MCF 10A (cell line): ENCODE measurements at regions of chr10 and their contacts with region 1.

Region 1: GRCh38 chr10:100100651-100101184 is 19.0 kb upstream of the CPN1 start:
- DNase-seq: peak; percentile 61
- H3K4me3 Mint-ChIP-seq: no peak overlapping the region
- H3K27ac Mint-ChIP-seq: no peak overlapping the region
- H3K4me1 Mint-ChIP-seq: no peaks in the 10 kb centered on the region
- H3K27me3 Mint-ChIP-seq: no peaks in the 10 kb centered on the region
- CTCF ChIP-seq: peak; percentile 35

Region 2: GRCh38 chr10:99906470-99906869 is 194.2 kb before region 1 on chr10:
- CTCF ChIA-PET with region 1: no interaction called
- POLR2A ChIA-PET with region 1: no interaction called
- intact Hi-C with region 1: loop called (anchors 1 kb)
- DNase-seq: peak; percentile 96
- H3K4me3 Mint-ChIP-seq: no peak overlapping the region
- H3K27ac Mint-ChIP-seq: peak overlapping the region; percentile 80
- H3K4me1 Mint-ChIP-seq: peaks cover 14% of the 10 kb centered on the region
- H3K27me3 Mint-ChIP-seq: no peaks in the 10 kb centered on the region
- CTCF ChIP-seq: peak; percentile 38

Region 3: DNA sequence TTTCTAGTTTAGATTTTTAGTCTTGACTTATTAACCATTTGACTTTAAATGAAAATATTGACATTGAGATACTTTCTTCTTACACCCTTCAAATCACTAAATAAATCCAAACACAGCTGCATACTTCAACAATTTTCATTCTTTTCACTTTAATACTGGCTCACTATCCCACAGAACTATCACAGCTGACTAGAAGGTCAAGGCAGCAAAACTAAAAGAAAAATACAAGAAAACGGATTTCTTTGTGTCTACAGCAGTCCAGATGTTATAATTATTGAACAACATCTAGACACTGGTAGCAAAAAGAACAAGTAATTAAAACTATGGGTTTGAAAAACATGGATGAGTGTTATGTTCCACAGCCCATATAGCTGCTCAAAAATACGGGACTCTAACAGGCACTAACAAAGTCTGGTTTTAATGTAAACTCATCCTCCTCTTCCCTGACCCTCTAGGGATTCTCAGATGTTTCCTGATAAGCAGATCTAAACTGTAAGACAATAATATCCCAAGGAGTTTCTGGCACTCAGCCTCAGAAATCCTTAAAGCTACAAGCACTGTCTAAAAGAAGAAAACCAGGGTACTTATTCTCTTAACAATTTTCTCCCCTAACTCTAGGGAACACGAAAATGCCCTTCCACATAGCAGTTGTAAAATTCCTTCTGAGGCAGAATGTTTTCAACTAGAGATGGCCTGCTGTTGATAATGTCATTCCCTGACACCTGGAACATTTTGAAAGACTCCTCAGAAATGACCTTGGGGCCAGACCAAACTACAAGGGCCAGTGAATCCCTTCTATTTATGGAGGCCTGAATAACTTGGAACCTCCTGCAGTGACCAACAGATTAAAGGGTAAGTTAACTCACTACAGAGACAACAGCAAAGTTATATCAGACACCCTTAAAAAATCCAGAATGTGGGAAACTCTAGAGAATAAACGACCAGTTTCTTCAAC is 103.8 kb before region 1 on chr10:
- CTCF ChIA-PET with region 1: no interaction called
- POLR2A ChIA-PET with region 1: no interaction called
- intact Hi-C with region 1: no loop called
- DNase-seq: no peak
- H3K4me3 Mint-ChIP-seq: peak overlapping the region; percentile 41
- H3K27ac Mint-ChIP-seq: peak overlapping the region; percentile 80
- H3K4me1 Mint-ChIP-seq: peaks cover 28% of the 10 kb centered on the region
- H3K27me3 Mint-ChIP-seq: no peaks in the 10 kb centered on the region
- CTCF ChIP-seq: no peak

Region 4: GRCh38 chr10:100185364-100186252 is 84.9 kb after region 1 on chr10 and contains the start of gene ERLIN1:
- CTCF ChIA-PET with region 1: no interaction called
- POLR2A ChIA-PET with region 1: no interaction called
- intact Hi-C with region 1: no loop called
- DNase-seq: peak; percentile 94
- H3K4me3 Mint-ChIP-seq: peak within 1 kb of the TSS; percentile 94
- H3K27ac Mint-ChIP-seq: peak within 1 kb of the TSS; percentile 90
- H3K4me1 Mint-ChIP-seq: peaks cover 31% of the 10 kb centered on the region
- H3K27me3 Mint-ChIP-seq: no peaks in the 10 kb centered on the region
- CTCF ChIP-seq: no peak
- total RNA-seq, gene ERLIN1: 38.0 and 42.9 TPM in 2 replicates